Heart left ventricle (tissue), 16 donors: ENCODE measurements at regions of chr5 and their contacts with region 1.

Region 1: DNA sequence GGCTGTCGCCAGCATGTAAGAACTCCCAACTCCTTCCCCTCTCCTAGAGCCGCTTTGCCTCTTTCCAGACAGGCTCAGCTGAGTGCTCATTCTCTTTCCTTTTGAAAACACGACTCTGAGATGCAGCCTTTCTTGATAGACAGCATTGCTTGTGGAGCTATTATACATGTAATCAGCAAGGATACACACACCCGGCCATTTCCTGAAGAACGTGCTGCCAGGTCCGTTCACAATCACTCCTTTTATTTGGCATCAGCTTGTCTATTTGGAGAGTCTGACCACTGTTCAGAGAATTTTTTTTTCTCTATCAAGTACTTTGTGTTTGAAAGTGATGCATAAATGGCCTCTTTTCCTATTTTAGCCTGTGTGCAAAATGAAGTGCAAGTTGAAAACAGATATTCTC is 328.7 kb downstream of the MARCHF11 start:
- DNase-seq: peak in 1 of 5 donors; percentile 20
- ATAC-seq: peak; percentile 25 to 73 (median 66)
- H3K4me3 ChIP-seq: peak overlapping the region in 3 of 12 donors; percentile 6 to 21 (median 6)
- H3K27ac ChIP-seq: peak overlapping the region in 6 of 12 donors; percentile 3 to 43 (median 30)
- H3K4me1 ChIP-seq: peaks cover 0 to 55% (median 44%) of the 10 kb centered on the region in 12 donors
- H3K27me3 ChIP-seq: no peaks in the 10 kb centered on the region
- CTCF ChIP-seq: no peak
- POLR2A ChIP-seq: no peak

Region 2: DNA sequence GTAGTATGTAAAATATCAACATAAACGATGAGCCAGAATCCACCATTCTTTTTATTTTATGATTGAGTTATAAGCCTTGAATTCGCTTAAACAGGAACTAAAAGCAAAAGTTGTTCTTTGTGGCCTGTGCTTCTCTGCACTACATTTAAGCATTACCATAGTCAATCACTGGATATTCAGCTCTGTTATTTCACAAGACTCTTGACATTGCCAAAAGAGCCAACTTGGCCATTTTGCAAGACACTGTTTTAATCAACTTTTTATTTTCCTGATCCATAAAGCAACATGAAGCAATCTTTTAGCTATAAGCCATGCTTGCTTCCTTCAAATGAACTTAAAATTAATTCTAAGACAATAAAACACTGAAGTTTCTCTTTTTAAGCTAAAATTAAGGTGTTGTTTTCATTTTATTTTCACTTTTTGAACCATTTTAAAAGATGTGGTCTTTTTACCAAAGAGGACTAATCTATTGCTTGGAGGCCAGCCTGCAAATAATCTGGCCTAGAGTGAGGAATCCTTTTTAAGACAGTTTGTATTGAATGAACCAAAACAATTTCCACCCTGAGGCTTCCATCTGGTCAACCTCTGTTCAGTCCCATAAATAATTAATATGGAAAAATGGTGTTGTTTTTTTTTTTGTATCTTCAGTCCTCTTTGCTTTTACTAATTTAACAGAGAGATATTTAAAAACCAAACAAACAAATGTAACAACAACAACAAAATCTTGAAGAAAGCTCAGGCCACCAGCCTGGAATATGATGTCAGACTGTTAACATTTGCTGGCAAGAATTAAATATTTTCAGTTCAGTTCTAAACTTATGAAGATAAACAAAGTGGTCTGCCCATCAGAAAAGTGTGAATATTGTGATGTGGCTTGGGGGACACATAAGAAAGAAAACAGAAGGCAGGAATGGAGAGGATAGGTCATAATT is 54.2 kb after region 1 on chr5:
- intact Hi-C with region 1: loop called in 1 of 10 experiments (anchors 10 kb)
- DNase-seq: no peak
- ATAC-seq: peak in 1 of 4 donors; percentile 18
- H3K4me3 ChIP-seq: no peak overlapping the region
- H3K27ac ChIP-seq: peak overlapping the region in 5 of 12 donors; percentile 11 to 39 (median 25)
- H3K4me1 ChIP-seq: peaks cover 0 to 37% (median 10%) of the 10 kb centered on the region in 12 donors
- H3K27me3 ChIP-seq: no peaks in the 10 kb centered on the region
- CTCF ChIP-seq: no peak
- POLR2A ChIP-seq: no peak